ENCODE measurements at regions of chr15 and their contacts with region 1.

Region 1: DNA sequence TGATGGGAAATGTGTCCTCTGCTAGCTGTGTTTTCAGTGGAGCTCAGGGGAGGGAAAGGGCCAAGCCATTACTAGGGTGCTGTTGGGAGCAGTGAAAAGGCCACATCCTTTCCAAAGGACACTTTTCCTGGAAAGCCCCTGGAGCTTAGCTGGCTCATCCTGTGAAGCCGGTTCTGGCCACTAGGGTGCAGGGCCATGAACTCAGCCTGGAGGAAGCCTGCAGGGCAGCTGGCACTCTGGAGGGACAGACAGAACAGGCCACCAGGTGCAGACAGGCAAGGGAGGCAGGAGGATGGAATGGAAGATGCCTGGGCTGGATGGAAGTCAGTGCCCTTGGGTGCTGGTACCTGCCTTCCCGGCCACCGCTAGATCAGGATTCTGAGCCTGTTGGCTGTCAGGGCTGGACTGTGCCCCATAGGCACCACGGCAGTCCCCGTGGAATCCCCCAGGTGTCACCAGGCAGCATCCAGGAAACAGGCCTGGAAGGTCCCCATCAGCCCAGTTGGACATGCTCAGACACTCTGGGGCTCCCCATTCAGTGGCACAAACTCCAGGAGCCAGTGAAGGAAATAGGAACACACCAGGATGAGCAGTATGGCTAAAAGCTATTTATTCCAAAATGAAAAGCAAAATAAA is 76.2 kb upstream of the C2CD4B start:
- DNase-seq: peak; percentile 5
- H3K4me3 ChIP-seq: no peak overlapping the region
- H3K27ac ChIP-seq: no peak overlapping the region
- H3K4me1 ChIP-seq: no peaks in the 10 kb centered on the region
- H3K27me3 ChIP-seq: peaks cover under 1% of the 10 kb centered on the region
- CTCF ChIP-seq: no peak

Region 2: DNA sequence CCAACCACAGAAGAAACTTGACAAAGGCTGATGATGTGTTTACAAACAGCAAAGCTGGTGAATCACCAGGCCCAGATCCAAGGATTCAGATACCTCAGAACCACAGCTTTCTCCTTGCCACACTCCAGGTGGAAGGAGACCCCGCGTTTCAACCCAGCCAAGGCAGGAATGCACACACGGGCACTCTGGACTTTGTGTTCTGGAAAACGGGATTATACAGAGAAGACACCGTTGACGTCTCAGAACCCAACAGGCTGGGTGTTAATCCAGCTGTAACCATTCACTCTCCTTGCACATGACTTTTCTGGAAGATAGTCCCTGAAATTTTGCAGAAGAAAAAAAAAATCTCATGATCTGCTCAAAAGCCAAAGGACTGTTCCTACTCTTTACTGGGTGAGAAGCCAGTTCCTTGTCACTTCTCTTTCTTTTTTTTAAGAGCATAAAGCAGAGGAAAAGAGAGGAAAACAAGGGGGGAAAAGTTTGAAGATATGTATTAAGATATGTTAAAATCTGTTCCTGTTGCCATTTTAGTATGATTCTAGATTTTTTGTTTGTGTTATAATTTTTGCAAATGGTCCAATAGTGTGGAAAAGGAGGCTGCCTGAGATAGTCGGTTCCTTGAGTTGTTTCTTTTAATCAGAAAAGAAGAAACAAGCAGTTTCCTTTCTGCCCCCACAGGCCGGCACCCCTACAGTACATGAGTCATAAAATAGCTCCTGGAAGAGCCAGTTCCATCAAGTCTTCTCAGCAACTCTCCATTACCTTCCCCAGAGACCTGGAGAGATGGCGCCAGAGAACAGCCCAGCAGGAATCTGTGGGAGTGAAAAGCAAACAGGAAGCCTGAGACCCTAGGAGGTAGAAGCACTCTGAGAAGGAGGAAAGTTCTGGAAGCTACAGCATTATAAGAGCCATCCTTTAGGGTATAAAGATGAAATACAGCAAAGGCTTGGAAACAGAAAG is 1085.2 kb before region 1 on chr15:
- CTCF ChIA-PET with region 1: no interaction called
- dilution Hi-C with region 1: no loop called
- in situ Hi-C with region 1: no loop called
- intact Hi-C with region 1: no loop called
- DNase-seq: peak; percentile 26
- H3K4me3 ChIP-seq: no peak overlapping the region
- H3K27ac ChIP-seq: no peak overlapping the region
- H3K4me1 ChIP-seq: no peaks in the 10 kb centered on the region
- H3K27me3 ChIP-seq: no peaks in the 10 kb centered on the region
- CTCF ChIP-seq: peak in 1 of 2 donors; percentile 19

Region 3: DNA sequence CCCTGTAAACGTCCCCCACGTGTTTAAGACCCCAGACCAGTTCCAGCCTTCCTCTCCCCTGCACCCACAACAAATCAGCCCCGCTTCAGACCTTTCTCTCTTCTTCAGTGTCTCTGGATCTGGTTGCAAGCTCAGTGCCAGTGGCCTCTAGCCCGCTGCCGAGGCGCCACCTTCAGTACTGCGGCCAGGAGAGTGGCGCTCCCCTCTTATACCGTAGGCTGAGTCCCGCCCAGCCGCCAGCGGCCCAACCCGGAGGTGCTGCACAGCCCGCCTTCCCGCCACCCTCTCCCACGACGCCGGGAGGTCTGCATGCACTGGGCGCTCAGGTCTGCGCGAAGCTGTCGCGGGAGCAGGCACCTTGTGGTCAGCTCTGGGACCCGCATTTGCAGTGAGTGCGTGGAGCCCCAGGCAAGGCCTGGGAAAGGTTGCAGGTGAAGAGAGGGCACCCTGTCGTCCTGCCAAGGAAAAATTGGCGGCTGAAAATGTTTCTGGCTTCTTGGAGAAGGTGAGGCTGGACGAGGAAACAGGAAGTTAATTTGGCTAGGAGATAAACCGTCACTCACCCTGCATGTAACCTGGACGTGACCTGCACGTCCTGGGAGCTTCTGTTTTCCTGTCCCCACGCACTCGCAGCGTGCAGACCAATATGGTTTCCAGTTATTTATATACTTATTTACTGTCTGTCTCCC is 76.0 kb before region 1 on chr15 and contains the start of gene C2CD4B:
- CTCF ChIA-PET with region 1: no interaction called
- dilution Hi-C with region 1: no loop called
- in situ Hi-C with region 1: no loop called
- intact Hi-C with region 1: loop called (anchors 10 kb)
- DNase-seq: peak; percentile 12
- H3K4me3 ChIP-seq: peak within 1 kb of the TSS in 2 of 3 experiments; percentile 18 to 20
- H3K27ac ChIP-seq: no peak within 1 kb of the TSS
- H3K4me1 ChIP-seq: peaks cover 10% of the 10 kb centered on the region
- H3K27me3 ChIP-seq: peaks cover 35% of the 10 kb centered on the region
- CTCF ChIP-seq: no peak
- total RNA-seq, gene C2CD4B: not detected

Region 4: DNA sequence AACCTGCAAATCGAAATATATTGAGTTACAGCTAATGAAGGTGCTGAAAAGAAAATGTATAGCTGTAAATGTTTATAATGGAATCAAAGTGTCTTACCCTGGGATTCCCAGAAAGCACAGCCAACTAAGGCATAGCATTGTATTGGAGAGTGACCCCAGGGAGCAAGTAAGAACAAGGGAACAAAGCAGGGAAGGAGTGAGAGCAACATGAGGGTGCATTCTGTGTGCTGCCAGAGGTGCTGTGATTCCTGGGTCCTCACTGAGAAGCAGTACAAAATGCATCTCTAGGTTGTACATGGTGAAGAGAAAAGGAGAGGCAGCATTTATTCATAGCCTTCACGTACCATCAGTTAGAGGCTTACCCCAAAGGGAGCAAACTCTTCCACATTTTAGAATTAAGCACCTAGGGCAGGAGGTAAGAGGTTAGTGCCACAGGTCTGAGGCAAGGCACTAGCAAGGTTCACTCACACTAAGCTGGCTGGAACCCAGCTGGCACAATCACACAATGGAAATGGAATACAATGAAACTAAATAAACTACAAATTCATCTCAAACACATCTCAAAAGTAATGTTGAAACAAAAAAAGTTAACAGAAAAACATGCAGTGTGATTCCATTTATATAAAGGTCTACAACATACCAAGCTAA is 75.3 kb after region 1 on chr15:
- CTCF ChIA-PET with region 1: no interaction called
- dilution Hi-C with region 1: no loop called
- in situ Hi-C with region 1: no loop called
- intact Hi-C with region 1: no loop called
- DNase-seq: no peak
- H3K4me3 ChIP-seq: no peak overlapping the region
- H3K27ac ChIP-seq: no peak overlapping the region
- H3K4me1 ChIP-seq: no peaks in the 10 kb centered on the region
- H3K27me3 ChIP-seq: no peaks in the 10 kb centered on the region
- CTCF ChIP-seq: no peak

Measured in mammary epithelial cell (primary cell).